Right lobe of liver (tissue), 6 donors: ENCODE measurements at regions of chr10 and their contacts with region 1.

Region 1: DNA sequence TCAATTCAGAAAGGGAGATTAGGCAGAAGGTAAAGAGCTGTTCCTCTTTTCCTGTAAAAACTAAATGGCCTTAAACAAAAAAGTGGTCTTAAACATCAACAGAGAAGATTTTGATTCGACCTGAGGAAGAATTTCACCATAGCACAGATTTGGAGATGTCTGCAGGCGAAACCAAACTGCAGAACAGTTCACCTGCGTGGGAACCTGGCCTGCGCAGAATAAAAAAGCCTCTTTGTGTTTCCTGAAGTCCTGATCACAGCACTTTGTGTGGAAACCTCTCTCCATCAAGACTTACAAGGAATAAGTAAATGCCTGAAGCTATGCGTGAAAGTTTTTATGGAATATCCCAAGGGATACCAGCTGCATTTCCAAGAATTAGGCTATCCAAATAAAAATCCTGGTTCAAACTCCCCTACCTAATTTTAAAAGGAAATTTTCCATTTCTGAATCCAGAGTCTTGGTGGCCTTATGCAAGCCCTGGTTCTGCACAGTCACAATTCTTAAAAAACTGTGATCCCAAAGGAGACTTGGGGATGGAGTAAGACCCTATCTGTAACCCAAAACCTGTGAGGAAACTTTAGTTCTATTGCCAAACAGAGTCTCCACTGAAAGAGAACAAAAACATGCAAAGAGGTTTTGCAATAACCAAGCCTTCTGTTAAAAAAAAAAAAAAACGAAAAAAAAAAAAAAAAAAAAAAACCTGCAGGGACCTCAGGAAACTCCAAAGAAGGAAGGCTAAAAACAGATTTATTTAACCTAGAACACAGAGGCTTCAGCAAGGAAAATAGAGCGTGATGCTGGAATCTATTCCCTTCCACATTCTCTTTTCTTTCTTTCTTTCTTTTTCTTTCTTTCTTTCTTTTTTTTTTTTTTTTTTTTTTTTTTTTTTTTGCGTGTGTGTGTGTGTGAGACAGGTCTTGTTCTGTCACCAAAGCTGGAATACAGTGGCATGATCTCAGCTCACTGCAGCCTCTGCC is 10.4 kb downstream of the CALML3 start:
- DNase-seq: no peak
- ATAC-seq: peak; percentile 17 to 59 (median 40)
- H3K4me3 ChIP-seq: no peak overlapping the region
- H3K27ac ChIP-seq: no peak overlapping the region
- H3K4me1 ChIP-seq: peaks cover 0 to 16% (median under 1%) of the 10 kb centered on the region in 4 donors
- H3K27me3 ChIP-seq: no peaks in the 10 kb centered on the region
- CTCF ChIP-seq: no peak
- POLR2A ChIP-seq: no peak

Region 2: DNA sequence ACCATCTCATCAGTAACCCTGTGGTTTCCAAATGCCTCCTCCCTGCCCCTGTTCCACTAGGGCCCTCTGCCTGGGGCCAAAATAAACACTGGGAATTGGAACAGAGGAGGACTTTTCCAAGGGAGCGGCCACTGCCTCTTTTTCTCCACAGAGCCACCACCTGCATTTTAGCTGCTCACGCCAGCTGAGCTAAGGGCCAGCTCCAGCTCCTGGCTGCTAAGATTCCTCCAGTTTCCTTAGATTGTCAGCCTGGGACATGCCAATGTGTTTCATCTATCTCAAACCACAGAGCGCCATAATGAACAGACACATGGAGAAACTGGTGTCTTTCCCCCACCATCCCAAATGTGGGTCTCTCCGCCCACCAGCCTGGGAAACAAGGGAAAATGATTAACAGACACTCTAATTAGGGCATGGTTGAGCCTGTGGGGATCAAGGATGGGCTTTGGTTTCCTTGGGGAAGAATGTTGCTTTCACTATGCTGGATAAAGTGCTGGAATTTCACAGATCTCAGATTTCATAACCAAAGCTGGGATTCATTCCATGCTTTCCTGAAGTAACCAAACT is 79.1 kb after region 1 on chr10:
- intact Hi-C with region 1: loop called in 1 of 2 experiments (anchors 10 kb)
- DNase-seq: no peak
- ATAC-seq: peak; percentile 64 to 84 (median 82)
- H3K4me3 ChIP-seq: no peak overlapping the region
- H3K27ac ChIP-seq: peak overlapping the region in 2 of 3 donors; percentile 52 to 64
- H3K4me1 ChIP-seq: peaks cover 0 to 26% (median 7%) of the 10 kb centered on the region in 4 donors
- H3K27me3 ChIP-seq: no peaks in the 10 kb centered on the region
- CTCF ChIP-seq: no peak
- POLR2A ChIP-seq: no peak